ENCODE measurements at regions of chr9 and their contacts with region 1.

Region 1: DNA sequence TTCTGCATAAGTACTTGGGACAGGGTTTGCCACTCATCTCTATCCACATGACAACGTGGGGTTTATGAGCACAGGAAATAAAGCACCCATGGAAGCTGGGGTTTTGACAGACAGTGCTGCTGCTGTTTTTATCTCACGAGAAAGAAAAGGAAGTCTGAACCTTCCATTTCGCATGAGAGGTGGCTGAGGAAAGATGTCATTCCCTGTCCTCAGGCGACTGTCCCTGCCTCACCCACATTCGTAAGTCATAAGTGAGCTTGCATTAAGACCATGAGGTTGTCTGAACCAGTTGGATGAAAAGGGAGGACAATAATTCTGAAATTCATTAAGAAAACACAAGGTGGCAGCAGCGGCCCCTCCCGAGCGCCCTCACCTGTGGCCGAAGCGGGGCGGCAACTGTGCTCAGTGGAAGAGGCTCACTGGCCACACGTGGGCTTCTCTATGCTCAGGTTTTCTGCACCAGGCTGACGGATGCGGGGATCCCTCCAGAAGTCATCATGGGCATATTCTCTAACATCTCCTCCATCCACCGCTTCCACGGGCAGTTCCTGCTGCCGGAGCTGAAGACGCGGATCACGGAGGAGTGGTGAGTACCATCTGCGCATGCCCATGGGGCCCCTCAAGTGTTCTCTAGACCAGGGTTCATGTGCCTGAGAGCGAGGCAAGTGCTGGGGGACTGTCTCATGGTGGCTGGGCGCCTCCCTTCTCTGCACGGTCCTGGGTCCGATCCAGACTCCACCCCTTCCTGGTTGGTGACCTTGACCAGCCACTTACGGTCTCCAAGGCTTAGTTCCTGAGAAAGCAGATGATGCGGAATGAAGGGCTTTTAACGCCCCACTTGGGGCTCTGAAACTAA is 54.7 kb upstream of the SUSD3 start:
- DNase-seq: peak in 33 of 35 experiments; percentile 35 to 83 (median 57)
- ATAC-seq: peak; percentile 76
- H3K4me3 ChIP-seq: no peak overlapping the region
- H3K4me3 Mint-ChIP-seq: peak overlapping the region; percentile 31 to 50 (median 49)
- H3K27ac ChIP-seq: peak overlapping the region; percentile 46
- H3K27ac Mint-ChIP-seq: peak overlapping the region; percentile 86 to 96
- H3K4me1 ChIP-seq: peaks cover 34 to 44% of the 10 kb centered on the region in 2 experiments
- H3K4me1 Mint-ChIP-seq: peaks cover 57 to 72% (median 67%) of the 10 kb centered on the region in 3 donors
- H3K27me3 ChIP-seq: no peaks in the 10 kb centered on the region
- H3K27me3 Mint-ChIP-seq: no peaks in the 10 kb centered on the region

Region 2: GRCh38 chr9:92696619-92697018 is 307.2 kb before region 1 on chr9:
- CTCF ChIA-PET with region 1: no interaction called
- POLR2A ChIA-PET with region 1: no interaction called
- DNase-seq: no peak
- ATAC-seq: no peak
- H3K4me3 ChIP-seq: no peak overlapping the region
- H3K4me3 Mint-ChIP-seq: no peak overlapping the region
- H3K27ac ChIP-seq: no peak overlapping the region
- H3K27ac Mint-ChIP-seq: no peak overlapping the region
- H3K4me1 ChIP-seq: no peaks in the 10 kb centered on the region
- H3K4me1 Mint-ChIP-seq: peaks cover 0 to 10% (median 6%) of the 10 kb centered on the region in 3 donors
- H3K27me3 ChIP-seq: no peaks in the 10 kb centered on the region
- H3K27me3 Mint-ChIP-seq: peaks cover 0 to 8% of the 10 kb centered on the region in 2 donors

Region 3: DNA sequence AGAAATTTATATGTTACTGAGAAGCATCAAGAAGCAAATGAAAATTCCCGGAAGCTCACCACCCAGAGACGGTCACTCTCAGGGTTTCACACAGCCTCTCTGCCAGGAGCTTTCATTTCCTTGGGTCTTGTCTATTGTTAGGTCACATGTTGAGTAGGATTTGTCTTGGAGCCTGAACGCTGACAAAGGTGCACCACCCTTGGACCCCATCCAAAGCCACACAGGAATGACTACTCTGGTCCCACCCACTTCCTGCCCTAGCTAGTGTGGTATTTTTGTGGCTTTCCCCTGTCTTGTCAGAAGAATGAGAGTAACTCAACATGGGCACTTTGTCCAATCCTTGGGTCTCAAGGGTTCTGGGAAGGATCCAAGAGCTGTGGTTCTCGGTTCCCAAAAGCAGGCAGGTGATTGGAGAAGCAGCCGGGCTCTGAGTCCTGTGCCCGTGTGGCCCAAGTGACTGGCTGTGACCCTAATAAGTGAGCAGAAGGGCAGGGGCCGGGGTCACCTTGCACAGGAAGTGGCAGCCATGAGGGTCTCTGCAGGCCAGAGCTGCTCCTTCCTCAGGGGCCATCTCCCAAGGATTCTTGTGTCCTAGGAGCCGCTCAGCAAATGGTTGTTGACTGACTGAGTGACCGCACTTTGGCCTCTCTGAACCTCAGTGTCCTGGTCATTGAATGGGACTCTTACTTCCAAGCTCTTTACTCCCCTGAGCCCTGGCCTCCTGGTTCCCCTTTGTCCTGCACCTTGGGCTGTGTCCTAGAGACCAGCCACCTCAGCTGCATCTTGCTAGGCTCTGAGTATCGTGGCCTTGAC is 49.5 kb before region 1 on chr9:
- CTCF ChIA-PET with region 1: interaction called, 9 to 10 read pairs
- POLR2A ChIA-PET with region 1: interaction called in 1 of 2 experiments, 3 read pairs
- DNase-seq: peak; percentile 62 to 93 (median 80)
- ATAC-seq: peak; percentile 87 to 92 (median 90)
- H3K4me3 ChIP-seq: peak overlapping the region; percentile 46 to 48
- H3K4me3 Mint-ChIP-seq: peak overlapping the region; percentile 77 to 94 (median 80)
- H3K27ac ChIP-seq: peak overlapping the region; percentile 88
- H3K27ac Mint-ChIP-seq: peak overlapping the region; percentile 99
- H3K4me1 ChIP-seq: peaks cover 55 to 84% of the 10 kb centered on the region in 2 experiments
- H3K4me1 Mint-ChIP-seq: peaks cover 84 to 92% (median 91%) of the 10 kb centered on the region in 3 donors
- H3K27me3 ChIP-seq: no peaks in the 10 kb centered on the region
- H3K27me3 Mint-ChIP-seq: no peaks in the 10 kb centered on the region

Region 4: DNA sequence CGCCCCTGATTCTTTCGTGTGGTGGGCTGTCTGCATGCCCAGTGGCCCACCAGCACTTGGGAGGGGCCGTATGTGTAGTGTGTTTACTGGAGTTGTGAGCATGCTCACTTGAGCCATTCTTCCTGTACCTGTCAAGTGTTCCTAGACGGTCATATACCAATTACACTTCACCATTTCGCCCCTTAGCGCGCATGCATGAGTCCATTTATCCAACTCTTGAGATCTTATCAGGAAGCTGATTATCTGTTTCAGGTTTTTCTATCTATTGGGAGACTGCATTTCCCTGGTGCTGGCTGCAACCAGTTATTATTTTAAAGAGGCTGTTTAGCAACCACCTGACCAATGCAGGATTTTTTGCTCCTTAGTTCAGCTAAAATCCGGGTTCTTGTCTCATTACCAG is 16.1 kb before region 1 on chr9:
- CTCF ChIA-PET with region 1: interaction called, 3 to 5 read pairs
- POLR2A ChIA-PET with region 1: interaction called in 1 of 2 experiments, 15 read pairs
- DNase-seq: no peak
- ATAC-seq: no peak
- H3K4me3 ChIP-seq: no peak overlapping the region
- H3K4me3 Mint-ChIP-seq: peak overlapping the region; percentile 8 to 55 (median 37)
- H3K27ac ChIP-seq: peak overlapping the region; percentile 16
- H3K27ac Mint-ChIP-seq: peak overlapping the region; percentile 83 to 85
- H3K4me1 ChIP-seq: peaks cover 27 to 58% of the 10 kb centered on the region in 2 experiments
- H3K4me1 Mint-ChIP-seq: peaks cover 85 to 93% (median 90%) of the 10 kb centered on the region in 3 donors
- H3K27me3 ChIP-seq: no peaks in the 10 kb centered on the region
- H3K27me3 Mint-ChIP-seq: no peaks in the 10 kb centered on the region

Region 5: GRCh38 chr9:93028448-93029006 is 24.7 kb after region 1 on chr9:
- CTCF ChIA-PET with region 1: interaction called, 4 to 18 read pairs
- POLR2A ChIA-PET with region 1: interaction called, 3 to 4 read pairs
- DNase-seq: peak; percentile 39 to 90 (median 74)
- ATAC-seq: peak; percentile 86 to 89 (median 86)
- H3K4me3 ChIP-seq: peak overlapping the region; percentile 35 to 43
- H3K4me3 Mint-ChIP-seq: peak overlapping the region; percentile 76 to 81 (median 78)
- H3K27ac ChIP-seq: peak overlapping the region; percentile 92
- H3K27ac Mint-ChIP-seq: peak overlapping the region; percentile 96 to 99
- H3K4me1 ChIP-seq: peaks cover 70 to 96% of the 10 kb centered on the region in 2 experiments
- H3K4me1 Mint-ChIP-seq: peaks cover 86 to 94% (median 90%) of the 10 kb centered on the region in 3 donors
- H3K27me3 ChIP-seq: no peaks in the 10 kb centered on the region
- H3K27me3 Mint-ChIP-seq: no peaks in the 10 kb centered on the region

Region 6: DNA sequence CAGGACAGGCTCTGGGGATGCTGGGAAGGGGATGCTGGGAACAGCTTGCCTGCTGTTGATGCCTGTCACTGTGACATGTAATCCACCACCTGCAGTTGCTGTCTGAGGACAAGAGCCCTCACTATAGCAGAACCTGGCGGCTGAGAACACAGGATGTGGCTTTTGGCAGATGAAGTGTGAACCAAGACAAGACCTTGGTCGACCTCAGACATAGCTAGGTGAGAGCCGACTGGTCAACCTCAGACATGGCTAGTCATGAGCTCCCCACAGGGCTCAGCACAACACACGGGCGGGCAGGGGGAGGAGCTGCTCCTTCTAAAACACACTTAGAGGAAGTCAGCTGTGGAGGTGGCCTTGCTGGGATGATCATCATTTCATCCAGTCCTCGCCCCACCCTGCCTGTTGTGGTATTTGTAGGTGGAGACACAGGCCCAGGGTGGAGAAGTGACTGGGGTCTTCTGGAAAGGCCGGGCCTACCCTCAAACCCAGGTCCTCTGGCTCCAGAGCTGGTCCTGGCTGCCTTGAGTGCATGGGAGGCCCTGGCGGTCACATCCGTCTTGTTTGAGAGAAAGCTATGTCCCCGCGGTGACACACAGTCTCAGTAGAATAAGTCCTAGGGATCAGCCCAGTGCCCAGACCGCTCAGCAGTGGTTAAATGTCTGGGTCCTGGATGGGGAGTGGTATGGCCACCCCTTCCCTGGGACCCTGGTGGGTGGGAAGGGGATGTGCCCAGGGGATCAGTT is 60.8 kb after region 1 on chr9:
- CTCF ChIA-PET with region 1: interaction called, 3 to 12 read pairs
- POLR2A ChIA-PET with region 1: no interaction called
- DNase-seq: peak; percentile 75 to 96 (median 90)
- ATAC-seq: peak; percentile 89 to 93 (median 90)
- H3K4me3 ChIP-seq: peak overlapping the region; percentile 40 to 42
- H3K4me3 Mint-ChIP-seq: peak overlapping the region; percentile 82 to 92 (median 86)
- H3K27ac ChIP-seq: peak overlapping the region; percentile 83
- H3K27ac Mint-ChIP-seq: peak overlapping the region; percentile 99 to 100
- H3K4me1 ChIP-seq: peaks cover 47 to 80% of the 10 kb centered on the region in 2 experiments
- H3K4me1 Mint-ChIP-seq: peaks cover 95 to 99% (median 97%) of the 10 kb centered on the region in 3 donors
- H3K27me3 ChIP-seq: no peaks in the 10 kb centered on the region
- H3K27me3 Mint-ChIP-seq: no peaks in the 10 kb centered on the region

Region 7: GRCh38 chr9:93143830-93144530 is 140.2 kb after region 1 on chr9:
- CTCF ChIA-PET with region 1: interaction called in 1 of 2 experiments, 11 read pairs
- POLR2A ChIA-PET with region 1: no interaction called
- DNase-seq: peak; percentile 58 to 82 (median 70)
- ATAC-seq: peak; percentile 96 to 98 (median 96)
- H3K4me3 ChIP-seq: peak overlapping the region in 1 of 2 donors; percentile 17
- H3K4me3 Mint-ChIP-seq: peak overlapping the region; percentile 11 to 69 (median 21)
- H3K27ac ChIP-seq: peak overlapping the region; percentile 82
- H3K27ac Mint-ChIP-seq: peak overlapping the region; percentile 98
- H3K4me1 ChIP-seq: peaks cover 23 to 61% of the 10 kb centered on the region in 2 experiments
- H3K4me1 Mint-ChIP-seq: peaks cover 50 to 63% (median 51%) of the 10 kb centered on the region in 3 donors
- H3K27me3 ChIP-seq: no peaks in the 10 kb centered on the region
- H3K27me3 Mint-ChIP-seq: no peaks in the 10 kb centered on the region